PC-9 (cell line): ENCODE measurements at regions of chr1 and their contacts with region 1.

Region 1: DNA sequence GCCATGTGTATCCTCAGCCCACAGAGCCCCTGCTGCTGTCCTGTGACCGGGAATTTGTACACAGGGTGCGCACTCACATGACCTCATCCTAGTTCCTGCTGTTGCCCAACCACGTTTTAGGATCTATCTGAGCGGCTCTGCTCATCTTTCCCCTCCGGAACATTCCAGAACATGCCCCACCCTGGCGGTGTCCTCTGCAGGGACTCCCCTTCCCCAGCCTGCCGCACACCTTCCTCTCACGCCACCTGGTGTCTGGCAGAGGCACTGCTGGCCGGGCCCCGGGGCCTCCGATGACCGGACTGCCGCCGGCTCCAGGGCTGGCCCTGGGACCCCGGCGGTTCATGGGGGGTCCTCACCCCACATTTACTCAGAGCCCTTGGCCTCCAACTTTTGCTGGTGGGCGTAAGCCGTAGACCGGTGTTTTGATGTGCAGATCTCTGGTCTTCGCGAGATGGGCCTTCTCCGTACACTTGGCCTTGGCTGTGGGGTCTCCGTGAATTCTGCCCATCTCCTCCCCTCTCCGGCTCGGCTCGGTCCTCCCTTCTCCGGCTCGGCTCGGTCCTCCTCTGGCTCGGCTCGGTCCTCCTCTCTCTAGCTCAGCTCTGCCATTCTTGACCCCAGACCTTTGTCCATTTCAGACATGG is 29.5 kb downstream of the ARHGEF16 start:
- DNase-seq: no peak
- H3K4me3 ChIP-seq: no peak overlapping the region
- H3K27ac ChIP-seq: no peak overlapping the region
- H3K4me1 ChIP-seq: peaks cover 22% of the 10 kb centered on the region
- H3K27me3 ChIP-seq: no peaks in the 10 kb centered on the region
- CTCF ChIP-seq: peak; percentile 75

Region 2: DNA sequence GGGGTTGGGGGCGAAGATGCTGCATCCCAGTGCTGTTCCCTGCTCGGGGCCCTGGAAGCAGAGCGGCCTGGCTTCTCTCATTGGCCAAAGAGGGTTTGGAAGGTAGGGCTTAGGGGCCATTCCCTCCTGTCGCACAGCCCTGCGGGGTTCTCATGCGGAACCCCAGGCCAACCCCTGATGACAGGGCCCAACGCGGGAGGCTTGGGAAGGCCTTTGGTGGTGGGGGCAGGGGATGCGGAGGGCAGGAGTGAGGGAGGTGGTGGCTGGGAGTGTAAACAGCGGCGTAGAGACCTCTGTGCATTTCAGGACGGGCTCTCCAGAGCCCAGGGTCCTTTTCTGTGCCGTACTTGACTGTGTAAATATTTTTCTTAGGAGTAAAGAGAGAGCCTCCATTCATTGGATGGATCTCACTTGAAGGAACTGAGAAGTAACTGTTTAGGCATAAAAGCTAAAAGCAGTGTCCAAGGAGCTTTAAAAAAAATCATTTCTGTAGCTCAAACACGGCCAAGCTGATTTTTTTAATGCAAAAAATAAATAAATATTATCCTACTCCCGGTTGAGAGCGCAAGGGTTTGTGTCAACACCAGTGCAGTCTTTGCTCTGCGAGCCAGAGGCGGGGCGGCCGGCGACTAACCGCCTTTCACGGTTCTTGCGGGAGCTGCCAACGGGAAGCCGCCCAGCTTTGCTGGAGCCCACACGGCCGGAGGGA is 245.8 kb before region 1 on chr1:
- CTCF ChIA-PET with region 1: no interaction called
- POLR2A ChIA-PET with region 1: no interaction called
- intact Hi-C with region 1: no loop called
- DNase-seq: no peak
- H3K4me3 ChIP-seq: no peak overlapping the region
- H3K27ac ChIP-seq: no peak overlapping the region
- H3K4me1 ChIP-seq: no peaks in the 10 kb centered on the region
- H3K27me3 ChIP-seq: peaks cover 100% of the 10 kb centered on the region
- CTCF ChIP-seq: no peak

Region 3: DNA sequence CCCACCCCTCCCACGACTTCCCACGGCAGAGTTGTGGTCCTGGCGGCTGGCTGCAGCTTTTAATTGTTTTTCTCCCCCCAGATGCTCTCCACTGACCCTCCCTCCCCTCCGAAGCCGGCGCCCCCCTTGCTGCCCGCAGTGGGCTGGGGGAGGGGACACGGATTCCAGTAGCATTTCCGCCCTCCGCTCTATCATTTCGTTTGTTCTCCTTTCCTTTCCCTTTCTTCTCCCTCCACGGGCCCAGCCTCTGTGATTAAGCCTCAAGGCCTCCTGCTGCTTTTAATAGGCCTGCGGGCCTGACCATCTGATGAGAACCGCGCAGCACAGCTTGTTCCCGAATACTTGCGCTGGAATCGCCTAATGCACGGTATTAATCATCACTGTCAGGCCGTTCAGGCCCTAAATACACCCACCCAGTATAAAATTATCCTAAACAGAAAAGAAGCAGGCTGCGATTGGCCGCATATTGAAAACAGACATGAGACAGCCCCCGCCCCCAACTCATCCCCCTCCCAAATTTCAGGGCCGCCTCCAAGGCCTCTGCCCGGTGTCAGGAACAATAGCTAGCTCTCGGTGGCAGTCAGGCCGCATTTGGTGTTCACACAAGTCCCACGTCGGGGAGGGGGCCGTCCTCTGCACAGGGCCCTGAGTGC is 131.5 kb before region 1 on chr1:
- CTCF ChIA-PET with region 1: no interaction called
- POLR2A ChIA-PET with region 1: no interaction called
- intact Hi-C with region 1: no loop called
- DNase-seq: no peak
- H3K4me3 ChIP-seq: no peak overlapping the region
- H3K27ac ChIP-seq: no peak overlapping the region
- H3K4me1 ChIP-seq: no peaks in the 10 kb centered on the region
- H3K27me3 ChIP-seq: peaks cover 98% of the 10 kb centered on the region
- CTCF ChIP-seq: no peak

Region 4: DNA sequence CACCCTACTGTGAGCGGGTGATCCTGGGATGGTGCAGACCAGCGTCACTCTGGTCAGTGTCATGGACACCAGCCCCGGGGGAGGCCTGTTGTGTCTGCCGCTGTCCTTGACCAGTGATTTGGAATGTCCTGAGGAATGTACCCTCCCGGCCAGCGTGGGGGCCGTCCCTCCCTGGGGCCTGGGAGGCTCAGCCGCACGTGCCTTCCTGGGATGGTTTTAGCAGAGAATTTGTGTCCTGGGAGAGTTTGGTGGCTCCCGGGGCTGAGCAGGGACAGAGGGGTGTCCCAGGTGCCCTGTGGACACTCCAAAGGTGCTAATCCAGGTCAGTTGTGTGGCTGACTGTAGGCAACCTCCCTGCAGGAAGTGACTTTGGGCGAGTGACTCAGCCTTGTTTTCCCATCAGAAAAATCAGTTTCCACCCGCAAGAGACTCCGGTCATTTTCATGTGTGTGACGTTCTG is 23.2 kb before region 1 on chr1:
- CTCF ChIA-PET with region 1: no interaction called
- POLR2A ChIA-PET with region 1: no interaction called
- intact Hi-C with region 1: loop called (anchors 2 kb)
- DNase-seq: peak in 1 of 2 experiments; percentile 56
- H3K4me3 ChIP-seq: no peak overlapping the region
- H3K27ac ChIP-seq: no peak overlapping the region
- H3K4me1 ChIP-seq: peaks cover 14% of the 10 kb centered on the region
- H3K27me3 ChIP-seq: no peaks in the 10 kb centered on the region
- CTCF ChIP-seq: no peak

Region 5: GRCh38 chr1:4224684-4225467 is 741.0 kb after region 1 on chr1:
- CTCF ChIA-PET with region 1: no interaction called
- POLR2A ChIA-PET with region 1: no interaction called
- intact Hi-C with region 1: no loop called
- DNase-seq: no peak
- H3K4me3 ChIP-seq: no peak overlapping the region
- H3K27ac ChIP-seq: no peak overlapping the region
- H3K4me1 ChIP-seq: no peaks in the 10 kb centered on the region
- H3K27me3 ChIP-seq: peaks cover 36% of the 10 kb centered on the region
- CTCF ChIP-seq: no peak